Psoas muscle (tissue), 8 donors: ENCODE measurements at regions of chr6 and their contacts with region 1.

Region 1: GRCh38 chr6:110958329-110959192 is at the start of gene GTF3C6:
- DNase-seq: peak; percentile 94 to 97
- ATAC-seq: peak; percentile 98 to 99 (median 98)
- H3K4me3 ChIP-seq: peak within 1 kb of the TSS; percentile 97
- H3K27ac ChIP-seq: peak within 1 kb of the TSS; percentile 98
- H3K4me1 ChIP-seq: peaks cover 7% of the 10 kb centered on the region
- H3K27me3 ChIP-seq: no peaks in the 10 kb centered on the region
- CTCF ChIP-seq: no peak
- total RNA-seq, gene GTF3C6: 112 to 143 (median 127) TPM

Region 2: DNA sequence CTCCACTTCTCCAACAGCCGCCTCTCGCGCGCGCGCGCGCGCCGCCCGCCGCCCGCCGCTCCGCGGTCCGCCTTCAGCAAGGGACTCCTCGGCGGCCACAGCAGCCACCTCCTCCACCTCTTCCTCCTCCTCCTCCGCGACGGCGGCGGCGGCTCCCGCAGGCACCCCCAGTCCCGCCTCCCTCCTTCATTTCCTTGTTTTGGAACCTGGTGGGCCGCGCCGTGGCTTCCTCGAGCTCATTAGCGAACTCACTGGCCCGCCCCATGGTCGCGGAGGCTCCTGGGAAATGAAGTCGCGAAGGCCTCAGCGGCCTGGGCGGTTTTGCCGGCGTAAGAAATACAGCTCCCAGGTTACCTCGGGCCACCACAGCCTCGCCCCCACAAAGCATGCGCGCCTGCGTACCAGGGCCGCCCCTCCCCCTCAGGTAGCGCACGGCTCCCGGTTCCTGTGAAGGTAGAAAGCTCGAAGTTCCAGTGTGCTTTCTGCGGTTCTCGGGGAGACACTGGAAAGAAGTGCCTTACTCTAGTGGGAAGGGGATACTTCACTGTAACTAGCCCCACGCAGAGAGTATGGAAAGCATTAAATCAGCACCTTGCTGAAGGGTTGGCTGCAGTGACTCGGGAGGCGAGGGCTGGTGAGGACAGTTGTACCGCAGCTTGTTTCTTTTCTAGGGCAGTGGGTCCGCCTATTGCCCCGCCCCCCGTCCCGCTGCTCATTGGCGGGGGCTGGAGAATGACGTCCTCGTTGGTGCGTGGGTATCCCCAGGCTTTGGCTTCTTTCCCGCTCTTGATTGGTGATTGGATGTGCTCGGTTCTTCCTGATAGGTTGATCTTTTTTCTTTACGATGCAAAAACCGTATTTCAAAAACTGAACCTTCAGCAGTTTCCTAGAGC is 143.1 kb before region 1 on chr6 and contains the start of gene CDK19:
- intact Hi-C with region 1: loop called in 1 of 2 experiments (anchors 10 kb)
- DNase-seq: peak; percentile 98 to 99
- ATAC-seq: peak; percentile 97 to 98 (median 98)
- H3K4me3 ChIP-seq: peak within 1 kb of the TSS; percentile 90
- H3K27ac ChIP-seq: peak within 1 kb of the TSS; percentile 90
- H3K4me1 ChIP-seq: peaks cover 9% of the 10 kb centered on the region
- H3K27me3 ChIP-seq: no peaks in the 10 kb centered on the region
- CTCF ChIP-seq: no peak
- total RNA-seq, gene CDK19: 4.7 to 11.6 (median 5.6) TPM